ENCODE measurements at regions of chr22 and their contacts with region 1.

Region 1: DNA sequence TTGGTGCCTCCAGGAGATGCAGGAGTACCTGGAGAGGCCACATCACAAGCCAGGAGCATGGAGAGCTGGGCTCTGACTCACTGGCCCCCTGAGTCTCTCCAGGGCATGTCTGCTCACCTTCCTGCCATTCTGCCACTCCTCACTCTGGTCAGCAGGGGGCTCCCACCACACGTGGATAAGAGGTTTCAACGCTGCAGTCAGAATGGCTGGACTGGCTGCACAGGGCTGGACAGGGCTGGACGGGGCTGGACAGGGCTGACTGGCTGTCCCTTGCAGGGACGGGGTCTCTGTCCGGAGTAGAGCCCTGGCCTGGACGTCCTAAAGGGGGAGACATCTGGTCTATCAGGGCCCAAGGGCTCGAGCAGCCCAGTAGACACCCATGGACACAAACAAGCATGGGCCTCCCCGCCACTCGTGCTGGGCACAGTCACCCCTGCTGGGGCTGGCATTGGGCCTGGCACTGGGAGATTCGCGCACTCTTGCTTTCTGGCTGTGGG is 34.6 kb downstream of the CYTH4 start:
- DNase-seq: peak; percentile 85
- ATAC-seq: peak; percentile 83
- H3K4me3 Mint-ChIP-seq: no peak overlapping the region
- H3K27ac Mint-ChIP-seq: no peak overlapping the region
- H3K4me1 Mint-ChIP-seq: peaks cover 42% of the 10 kb centered on the region
- H3K27me3 Mint-ChIP-seq: peaks cover 11% of the 10 kb centered on the region

Region 2: DNA sequence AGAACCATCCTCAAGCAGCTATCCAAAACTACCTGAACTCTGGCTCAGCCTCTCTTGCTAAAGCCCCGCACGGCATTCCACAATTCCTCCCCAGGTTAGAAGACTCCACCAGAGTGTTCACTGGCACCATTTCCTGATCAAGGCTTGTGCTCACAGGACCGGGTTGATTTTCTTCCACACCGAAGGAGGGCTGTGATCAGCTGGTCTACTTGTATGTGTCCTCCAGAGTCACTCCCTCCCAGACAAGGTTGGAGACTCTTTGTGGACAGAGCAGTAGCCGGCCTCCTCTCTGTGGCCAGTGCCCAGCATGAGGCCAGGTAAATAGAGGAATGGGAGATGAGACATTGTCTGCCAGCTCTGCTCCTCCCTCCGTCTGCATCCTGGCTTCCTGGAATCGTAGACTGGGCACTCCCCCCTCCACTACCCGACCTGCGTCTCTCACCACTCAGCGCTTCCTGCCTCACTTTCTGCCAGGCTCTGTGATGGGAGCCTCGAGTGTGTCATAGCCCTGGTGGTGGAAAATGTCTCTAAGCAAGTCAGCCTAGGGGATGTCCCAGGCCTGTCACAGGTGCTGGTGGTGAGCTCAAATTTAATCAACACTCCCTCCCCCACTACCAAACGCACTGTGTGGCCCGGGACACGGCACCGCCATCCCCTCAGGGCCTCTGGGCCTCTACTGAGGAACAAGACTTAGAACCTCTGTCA is 194.9 kb before region 1 on chr22:
- CTCF ChIA-PET with region 1: no interaction called
- DNase-seq: peak; percentile 98
- ATAC-seq: peak; percentile 97
- H3K4me3 Mint-ChIP-seq: peak overlapping the region; percentile 70
- H3K27ac Mint-ChIP-seq: peak overlapping the region; percentile 99
- H3K4me1 Mint-ChIP-seq: peaks cover 72% of the 10 kb centered on the region
- H3K27me3 Mint-ChIP-seq: no peaks in the 10 kb centered on the region

Region 3: GRCh38 chr22:37273126-37273845 is 43.6 kb before region 1 on chr22:
- CTCF ChIA-PET with region 1: interaction called, 10 read pairs
- DNase-seq: peak; percentile 71
- ATAC-seq: peak; percentile 93
- H3K4me3 Mint-ChIP-seq: peak overlapping the region; percentile 1
- H3K27ac Mint-ChIP-seq: peak overlapping the region; percentile 75
- H3K4me1 Mint-ChIP-seq: peaks cover 54% of the 10 kb centered on the region
- H3K27me3 Mint-ChIP-seq: peaks cover 2% of the 10 kb centered on the region

Region 4: DNA sequence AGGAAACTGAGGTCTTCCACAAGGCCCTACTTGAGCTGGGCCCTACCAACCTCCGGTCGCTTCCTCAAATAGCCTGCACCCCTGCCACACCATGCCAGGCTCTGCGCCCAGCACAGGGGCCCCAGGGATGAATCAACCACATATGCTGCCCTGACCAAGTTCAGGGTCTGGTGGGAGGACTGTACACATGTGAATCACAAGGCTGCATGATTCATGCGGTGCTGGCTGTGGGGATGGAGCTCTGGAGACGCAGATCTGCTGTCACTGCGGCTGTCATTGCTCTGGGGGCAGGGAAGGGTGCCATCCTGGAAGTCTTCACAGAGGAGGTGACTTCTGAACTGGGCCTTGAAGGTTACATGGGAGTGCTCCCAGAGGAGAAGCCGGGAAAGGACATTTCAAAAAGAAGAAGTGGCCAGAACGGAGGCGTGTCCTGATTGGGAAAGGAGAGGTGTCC is 13.1 kb before region 1 on chr22:
- CTCF ChIA-PET with region 1: interaction called, 12 read pairs
- DNase-seq: peak; percentile 89
- ATAC-seq: peak; percentile 45
- H3K4me3 Mint-ChIP-seq: peak overlapping the region; percentile 34
- H3K27ac Mint-ChIP-seq: peak overlapping the region; percentile 100
- H3K4me1 Mint-ChIP-seq: peaks cover 97% of the 10 kb centered on the region
- H3K27me3 Mint-ChIP-seq: no peaks in the 10 kb centered on the region

Region 5: GRCh38 chr22:37428649-37429586 is 112.0 kb after region 1 on chr22:
- CTCF ChIA-PET with region 1: interaction called, 60 read pairs
- DNase-seq: peak; percentile 69
- ATAC-seq: peak; percentile 56
- H3K4me3 Mint-ChIP-seq: no peak overlapping the region
- H3K27ac Mint-ChIP-seq: no peak overlapping the region
- H3K4me1 Mint-ChIP-seq: peaks cover 18% of the 10 kb centered on the region
- H3K27me3 Mint-ChIP-seq: peaks cover 58% of the 10 kb centered on the region

Region 6: DNA sequence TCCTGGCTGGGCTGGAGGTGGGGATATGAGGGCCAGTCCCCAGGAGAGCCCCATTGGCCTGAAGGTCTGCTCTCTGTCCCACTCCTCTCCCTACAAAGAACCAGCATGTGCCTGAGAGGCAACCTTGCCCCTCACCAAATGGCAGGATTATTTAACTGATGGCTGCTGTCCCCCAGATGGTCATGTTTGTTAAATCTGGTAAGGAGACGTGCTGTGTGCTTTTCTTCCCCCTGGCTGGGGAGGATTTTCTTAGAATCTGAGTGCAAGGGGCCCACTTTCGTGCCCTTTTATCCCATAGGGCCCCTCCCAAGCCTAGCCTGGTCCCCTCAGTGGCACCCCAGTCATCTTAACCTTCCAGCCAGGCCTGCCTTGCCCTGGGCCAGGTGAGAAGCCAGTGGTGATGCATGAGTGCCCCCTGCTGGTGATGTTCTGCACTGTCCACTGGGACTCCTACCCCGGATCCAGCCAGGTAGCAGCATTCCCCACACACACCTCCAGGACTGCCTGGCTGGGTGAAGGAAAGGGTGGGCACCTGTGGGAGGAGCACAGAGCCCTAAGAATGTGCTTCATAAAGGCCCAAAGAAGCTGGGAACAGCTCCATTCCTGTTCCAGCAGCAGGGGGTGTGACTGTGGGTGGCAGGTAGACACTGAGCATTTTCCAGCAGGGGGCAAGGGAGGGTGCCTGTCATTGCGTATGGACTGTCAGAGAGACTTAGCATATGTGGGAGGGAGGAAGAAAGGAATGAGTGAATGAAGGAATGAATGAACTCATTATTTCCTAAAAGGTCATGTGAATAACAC is 140.4 kb after region 1 on chr22:
- CTCF ChIA-PET with region 1: interaction called, 67 read pairs
- DNase-seq: peak; percentile 87
- ATAC-seq: peak; percentile 98
- H3K4me3 Mint-ChIP-seq: no peak overlapping the region
- H3K27ac Mint-ChIP-seq: no peak overlapping the region
- H3K4me1 Mint-ChIP-seq: no peaks in the 10 kb centered on the region
- H3K27me3 Mint-ChIP-seq: no peaks in the 10 kb centered on the region

Region 7: GRCh38 chr22:37519268-37520195 is 202.6 kb after region 1 on chr22 and contains the start of gene CARD10:
- CTCF ChIA-PET with region 1: no interaction called
- DNase-seq: no peak
- ATAC-seq: peak; percentile 75
- H3K4me3 Mint-ChIP-seq: peak within 1 kb of the TSS; percentile 51
- H3K27ac Mint-ChIP-seq: no peak within 1 kb of the TSS
- H3K4me1 Mint-ChIP-seq: peaks cover 3% of the 10 kb centered on the region
- H3K27me3 Mint-ChIP-seq: peaks cover 72% of the 10 kb centered on the region
- total RNA-seq, gene CARD10: 0.16 TPM in 1 of 2 experiments, not detected in the other